ENCODE measurements at regions of chr6 and their contacts with region 1.

Region 1: GRCh38 chr6:167219967-167220512 is 62.3 kb upstream of the GPR31 start:
- DNase-seq: no peak
- ATAC-seq: no peak

Region 2: GRCh38 chr6:167291623-167292300 is 71.7 kb after region 1 on chr6:
- intact Hi-C with region 1: loop called (anchors 5 kb)
- DNase-seq: no peak
- ATAC-seq: no peak

Region 3: DNA sequence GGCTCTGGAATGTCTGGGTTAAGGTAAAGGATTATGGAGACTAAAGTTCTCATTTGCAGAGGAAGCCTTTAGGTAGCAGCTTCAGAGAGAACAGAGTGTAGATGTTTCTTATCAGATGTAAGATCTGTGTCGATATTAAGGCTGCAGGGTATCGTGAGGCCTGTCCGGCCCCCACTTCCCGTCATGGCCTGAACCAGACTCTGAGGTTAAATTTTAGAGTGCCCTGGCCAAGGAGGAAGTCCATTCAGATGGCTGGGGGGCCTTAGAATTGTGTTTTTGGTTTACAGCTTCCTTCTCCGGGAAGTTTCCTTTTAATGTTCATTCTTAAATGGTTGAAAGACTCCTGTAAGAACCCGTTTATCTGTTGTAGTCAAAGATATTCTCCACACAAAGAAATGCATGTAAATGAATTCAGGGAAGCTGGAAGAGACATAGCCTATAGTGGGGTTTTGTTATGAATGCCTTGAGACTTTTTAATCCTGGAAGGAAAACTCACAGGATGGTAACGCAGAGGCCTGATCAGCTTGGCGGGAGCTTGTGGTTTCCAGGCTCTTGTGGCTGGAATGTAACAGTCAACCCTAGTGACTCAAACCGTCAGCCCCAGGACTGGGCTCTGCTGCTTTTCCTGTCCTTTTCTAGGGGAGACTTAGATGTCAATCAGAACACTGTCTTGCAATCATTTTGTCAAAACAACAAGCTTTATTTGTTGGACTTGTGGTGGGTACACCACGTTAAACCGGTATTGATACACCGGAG is 812.1 kb after region 1 on chr6:
- intact Hi-C with region 1: no loop called
- DNase-seq: no peak
- ATAC-seq: no peak

Measured in Right ventricle myocardium inferior (tissue), 1 donor.